Naive thymus-derived CD4-positive, alpha-beta T cell (primary cell): ENCODE measurements at regions of chr19 and their contacts with region 1.

Region 1: GRCh38 chr19:36214386-36215275 is at the starts of genes ZNF146 and ZNF565:
- DNase-seq: peak; percentile 87 to 97 (median 96)
- ATAC-seq: peak; percentile 94
- H3K4me3 ChIP-seq: peak within 1 kb of the TSS; percentile 97
- H3K4me3 Mint-ChIP-seq: no peak within 1 kb of the TSS
- H3K27ac ChIP-seq: peak within 1 kb of the TSS; percentile 94
- H3K27ac Mint-ChIP-seq: peak within 1 kb of the TSS in 2 of 9 donors; percentile 38 to 41
- H3K4me1 ChIP-seq: peaks cover 14 to 19% of the 10 kb centered on the region in 2 donors
- H3K4me1 Mint-ChIP-seq: peaks cover 13 to 28% (median 25%) of the 10 kb centered on the region in 7 donors
- H3K27me3 ChIP-seq: no peaks in the 10 kb centered on the region
- H3K27me3 Mint-ChIP-seq: no peaks in the 10 kb centered on the region
- total RNA-seq, gene ZNF146: 27.7 to 77.4 (median 57.7) TPM
- total RNA-seq, gene ZNF565: 2.7 to 11.6 (median 7.8) TPM

Region 2: GRCh38 chr19:35648017-35648961 is 566.3 kb before region 1 on chr19 and contains the start of gene COX6B1:
- CTCF ChIA-PET with region 1: no interaction called
- POLR2A ChIA-PET with region 1: no interaction called
- intact Hi-C with region 1: loop called in 1 of 2 experiments (anchors 5 kb)
- DNase-seq: peak; percentile 63 to 95 (median 91)
- ATAC-seq: peak; percentile 80
- H3K4me3 ChIP-seq: peak within 1 kb of the TSS; percentile 95
- H3K4me3 Mint-ChIP-seq: peak within 1 kb of the TSS; percentile 88 to 99 (median 97)
- H3K27ac ChIP-seq: peak within 1 kb of the TSS; percentile 89
- H3K27ac Mint-ChIP-seq: peak within 1 kb of the TSS; percentile 89 to 98 (median 95)
- H3K4me1 ChIP-seq: peaks cover 7 to 25% of the 10 kb centered on the region in 2 donors
- H3K4me1 Mint-ChIP-seq: peaks cover 17 to 67% (median 42%) of the 10 kb centered on the region in 7 donors
- H3K27me3 ChIP-seq: no peaks in the 10 kb centered on the region
- H3K27me3 Mint-ChIP-seq: no peaks in the 10 kb centered on the region
- total RNA-seq, gene COX6B1: 172 to 464 (median 232) TPM

Region 3: DNA sequence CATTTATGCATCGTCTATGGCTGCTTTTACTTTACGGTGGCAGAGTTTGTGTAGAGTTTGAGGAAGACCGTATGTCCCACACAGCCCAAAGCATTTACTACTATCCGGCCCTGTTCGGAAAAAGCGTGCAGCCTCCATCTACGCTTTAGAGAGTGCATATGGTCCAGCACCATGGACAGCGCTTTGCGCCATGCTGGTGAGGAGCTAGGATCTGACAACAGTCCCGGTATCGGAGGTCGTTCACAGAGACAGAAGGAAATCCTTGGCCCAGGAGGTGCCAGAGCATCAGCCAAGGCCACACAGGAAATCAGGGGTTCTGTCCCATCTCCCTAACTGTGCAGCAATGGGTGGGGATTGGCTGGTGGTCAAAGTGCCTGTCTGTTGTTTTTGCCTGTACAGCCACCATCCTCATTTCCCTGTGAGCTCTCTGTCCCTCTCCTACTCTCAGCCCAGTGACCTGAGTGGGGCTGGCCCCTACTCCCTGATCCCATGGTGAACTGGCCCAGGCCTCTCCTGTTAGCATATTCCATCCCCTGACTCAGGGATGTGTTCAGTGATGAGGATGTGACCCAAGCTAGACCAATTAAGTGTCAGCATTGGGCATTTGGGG is 385.8 kb before region 1 on chr19:
- CTCF ChIA-PET with region 1: no interaction called
- POLR2A ChIA-PET with region 1: no interaction called
- intact Hi-C with region 1: no loop called
- DNase-seq: peak in 7 of 9 donors; percentile 26 to 66 (median 40)
- ATAC-seq: peak; percentile 60
- H3K4me3 ChIP-seq: no peak overlapping the region
- H3K4me3 Mint-ChIP-seq: no peak overlapping the region
- H3K27ac ChIP-seq: no peak overlapping the region
- H3K27ac Mint-ChIP-seq: no peak overlapping the region
- H3K4me1 ChIP-seq: no peaks in the 10 kb centered on the region
- H3K4me1 Mint-ChIP-seq: peaks cover 0 to 2% (median 0%) of the 10 kb centered on the region in 7 donors
- H3K27me3 ChIP-seq: no peaks in the 10 kb centered on the region
- H3K27me3 Mint-ChIP-seq: peaks cover 10 to 36% (median 36%) of the 10 kb centered on the region in 5 donors

Region 4: GRCh38 chr19:36114763-36115452 is 99.7 kb before region 1 on chr19 and contains the start of gene POLR2I:
- CTCF ChIA-PET with region 1: no interaction called
- POLR2A ChIA-PET with region 1: interaction called, 13 read pairs
- intact Hi-C with region 1: loop called (anchors 1 kb)
- DNase-seq: peak; percentile 95 to 100 (median 99)
- ATAC-seq: peak; percentile 92
- H3K4me3 ChIP-seq: peak within 1 kb of the TSS; percentile 97
- H3K4me3 Mint-ChIP-seq: peak within 1 kb of the TSS; percentile 89 to 98 (median 96)
- H3K27ac ChIP-seq: peak within 1 kb of the TSS; percentile 90
- H3K27ac Mint-ChIP-seq: peak within 1 kb of the TSS; percentile 97 to 99 (median 98)
- H3K4me1 ChIP-seq: peaks cover 14 to 15% of the 10 kb centered on the region in 2 donors
- H3K4me1 Mint-ChIP-seq: peaks cover 27 to 54% (median 42%) of the 10 kb centered on the region in 7 donors
- H3K27me3 ChIP-seq: no peaks in the 10 kb centered on the region
- H3K27me3 Mint-ChIP-seq: peaks cover 0 to 5% (median 0%) of the 10 kb centered on the region in 5 donors
- total RNA-seq, gene POLR2I: 20.9 to 56.7 (median 44.7) TPM

Region 5: GRCh38 chr19:36196249-36196648 is 18.4 kb before region 1 on chr19:
- CTCF ChIA-PET with region 1: no interaction called
- POLR2A ChIA-PET with region 1: no interaction called
- intact Hi-C with region 1: no loop called
- DNase-seq: no peak
- ATAC-seq: no peak
- H3K4me3 ChIP-seq: no peak overlapping the region
- H3K4me3 Mint-ChIP-seq: no peak overlapping the region
- H3K27ac ChIP-seq: no peak overlapping the region
- H3K27ac Mint-ChIP-seq: no peak overlapping the region
- H3K4me1 ChIP-seq: no peaks in the 10 kb centered on the region
- H3K4me1 Mint-ChIP-seq: no peaks in the 10 kb centered on the region
- H3K27me3 ChIP-seq: no peaks in the 10 kb centered on the region
- H3K27me3 Mint-ChIP-seq: no peaks in the 10 kb centered on the region

Region 6: GRCh38 chr19:36266342-36266961 is 51.8 kb after region 1 on chr19:
- CTCF ChIA-PET with region 1: no interaction called
- POLR2A ChIA-PET with region 1: no interaction called
- intact Hi-C with region 1: no loop called
- DNase-seq: no peak
- ATAC-seq: no peak
- H3K4me3 ChIP-seq: no peak overlapping the region
- H3K4me3 Mint-ChIP-seq: peak overlapping the region in 1 of 10 donors; percentile 45
- H3K27ac ChIP-seq: no peak overlapping the region
- H3K27ac Mint-ChIP-seq: no peak overlapping the region
- H3K4me1 ChIP-seq: no peaks in the 10 kb centered on the region
- H3K4me1 Mint-ChIP-seq: no peaks in the 10 kb centered on the region
- H3K27me3 ChIP-seq: no peaks in the 10 kb centered on the region
- H3K27me3 Mint-ChIP-seq: no peaks in the 10 kb centered on the region

Region 7: GRCh38 chr19:36489118-36489919 is 274.7 kb after region 1 on chr19 and contains the start of gene ZNF566:
- CTCF ChIA-PET with region 1: no interaction called
- POLR2A ChIA-PET with region 1: interaction called, 5 read pairs
- intact Hi-C with region 1: loop called (anchors 1 kb)
- DNase-seq: peak; percentile 74 to 98 (median 94)
- ATAC-seq: peak; percentile 95
- H3K4me3 ChIP-seq: peak within 1 kb of the TSS; percentile 97
- H3K4me3 Mint-ChIP-seq: peak within 1 kb of the TSS; percentile 93 to 99 (median 98)
- H3K27ac ChIP-seq: peak within 1 kb of the TSS; percentile 90
- H3K27ac Mint-ChIP-seq: peak within 1 kb of the TSS; percentile 93 to 99 (median 98)
- H3K4me1 ChIP-seq: peaks cover 9 to 10% of the 10 kb centered on the region in 2 donors
- H3K4me1 Mint-ChIP-seq: peaks cover 22 to 43% (median 30%) of the 10 kb centered on the region in 7 donors
- H3K27me3 ChIP-seq: no peaks in the 10 kb centered on the region
- H3K27me3 Mint-ChIP-seq: no peaks in the 10 kb centered on the region
- total RNA-seq, gene ZNF566: 9.2 to 29.8 (median 9.3) TPM

Region 8: DNA sequence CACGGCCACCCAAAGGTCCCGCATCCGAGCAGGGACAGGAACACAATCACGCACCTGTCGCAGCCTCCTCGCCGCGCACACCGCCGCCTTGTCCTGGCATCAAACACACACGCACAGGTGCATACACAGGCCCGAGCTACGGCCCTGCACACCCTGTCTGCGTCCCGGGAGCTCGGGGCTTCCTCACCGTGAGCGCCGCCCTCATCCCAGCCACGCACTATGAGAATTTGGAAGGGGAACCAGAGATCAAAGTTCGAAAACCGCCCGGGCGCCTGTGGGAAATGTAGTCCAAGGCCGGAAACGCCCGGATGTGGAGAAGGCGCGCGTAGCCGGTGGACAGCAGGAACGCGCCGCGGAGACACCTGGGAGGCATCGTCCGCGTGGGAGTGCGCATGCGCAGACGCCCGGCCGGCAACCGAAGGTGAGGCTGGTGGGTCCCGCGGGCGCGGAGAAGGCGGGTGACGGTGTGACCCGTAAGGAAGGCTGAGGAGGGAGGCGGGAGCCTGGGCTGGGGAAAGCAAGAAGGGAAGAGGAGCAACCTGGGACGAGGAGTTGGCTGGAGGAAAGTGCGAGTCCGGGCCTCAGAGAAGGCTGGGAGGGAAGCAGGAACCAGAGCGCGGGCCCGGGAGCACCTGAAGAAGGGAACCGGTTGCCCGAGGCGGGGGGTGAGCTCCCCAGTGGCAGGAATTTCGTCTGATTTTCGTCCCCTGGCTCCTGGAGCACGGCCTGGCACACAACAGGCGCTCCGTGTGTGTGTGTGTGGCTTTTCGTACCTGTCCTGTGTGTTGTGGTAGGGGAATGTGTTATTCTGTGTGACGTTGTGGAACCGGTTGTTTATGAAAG is 472.8 kb after region 1 on chr19 and contains the start of gene ZNF567:
- CTCF ChIA-PET with region 1: no interaction called
- POLR2A ChIA-PET with region 1: no interaction called
- intact Hi-C with region 1: loop called (anchors 1 kb)
- DNase-seq: peak; percentile 90 to 99 (median 93)
- ATAC-seq: peak; percentile 97
- H3K4me3 ChIP-seq: peak within 1 kb of the TSS; percentile 85
- H3K4me3 Mint-ChIP-seq: peak within 1 kb of the TSS; percentile 94 to 100 (median 98)
- H3K27ac ChIP-seq: peak within 1 kb of the TSS; percentile 86
- H3K27ac Mint-ChIP-seq: peak within 1 kb of the TSS; percentile 92 to 97 (median 95)
- H3K4me1 ChIP-seq: peaks cover 13 to 22% of the 10 kb centered on the region in 2 donors
- H3K4me1 Mint-ChIP-seq: peaks cover 26 to 49% (median 40%) of the 10 kb centered on the region in 7 donors
- H3K27me3 ChIP-seq: no peaks in the 10 kb centered on the region
- H3K27me3 Mint-ChIP-seq: peaks cover 0 to 5% (median 0%) of the 10 kb centered on the region in 5 donors
- total RNA-seq, gene ZNF567: 7.0 to 18.3 (median 9.3) TPM

Region 9: GRCh38 chr19:37077934-37078725 is 863.5 kb after region 1 on chr19 and contains the start of gene ZNF420:
- CTCF ChIA-PET with region 1: no interaction called
- POLR2A ChIA-PET with region 1: interaction called, 4 read pairs
- intact Hi-C with region 1: loop called in 1 of 2 experiments (anchors 1 kb)
- DNase-seq: peak; percentile 64 to 89 (median 84)
- ATAC-seq: peak; percentile 98
- H3K4me3 ChIP-seq: peak within 1 kb of the TSS; percentile 92
- H3K4me3 Mint-ChIP-seq: peak within 1 kb of the TSS; percentile 90 to 100 (median 96)
- H3K27ac ChIP-seq: peak within 1 kb of the TSS; percentile 82
- H3K27ac Mint-ChIP-seq: peak within 1 kb of the TSS; percentile 70 to 99 (median 94)
- H3K4me1 ChIP-seq: peaks cover 11 to 19% of the 10 kb centered on the region in 2 donors
- H3K4me1 Mint-ChIP-seq: peaks cover 16 to 43% (median 34%) of the 10 kb centered on the region in 7 donors
- H3K27me3 ChIP-seq: no peaks in the 10 kb centered on the region
- H3K27me3 Mint-ChIP-seq: no peaks in the 10 kb centered on the region
- total RNA-seq, gene ZNF420: 10.8 to 34.9 (median 15.9) TPM

Region 10: GRCh38 chr19:37160153-37160552 is 945.5 kb after region 1 on chr19:
- CTCF ChIA-PET with region 1: no interaction called
- POLR2A ChIA-PET with region 1: no interaction called
- intact Hi-C with region 1: no loop called
- DNase-seq: no peak
- ATAC-seq: no peak
- H3K4me3 ChIP-seq: no peak overlapping the region
- H3K4me3 Mint-ChIP-seq: no peak overlapping the region
- H3K27ac ChIP-seq: no peak overlapping the region
- H3K27ac Mint-ChIP-seq: no peak overlapping the region
- H3K4me1 ChIP-seq: no peaks in the 10 kb centered on the region
- H3K4me1 Mint-ChIP-seq: peaks cover 0 to 4% (median 0%) of the 10 kb centered on the region in 7 donors
- H3K27me3 ChIP-seq: no peaks in the 10 kb centered on the region
- H3K27me3 Mint-ChIP-seq: no peaks in the 10 kb centered on the region

Region 11: DNA sequence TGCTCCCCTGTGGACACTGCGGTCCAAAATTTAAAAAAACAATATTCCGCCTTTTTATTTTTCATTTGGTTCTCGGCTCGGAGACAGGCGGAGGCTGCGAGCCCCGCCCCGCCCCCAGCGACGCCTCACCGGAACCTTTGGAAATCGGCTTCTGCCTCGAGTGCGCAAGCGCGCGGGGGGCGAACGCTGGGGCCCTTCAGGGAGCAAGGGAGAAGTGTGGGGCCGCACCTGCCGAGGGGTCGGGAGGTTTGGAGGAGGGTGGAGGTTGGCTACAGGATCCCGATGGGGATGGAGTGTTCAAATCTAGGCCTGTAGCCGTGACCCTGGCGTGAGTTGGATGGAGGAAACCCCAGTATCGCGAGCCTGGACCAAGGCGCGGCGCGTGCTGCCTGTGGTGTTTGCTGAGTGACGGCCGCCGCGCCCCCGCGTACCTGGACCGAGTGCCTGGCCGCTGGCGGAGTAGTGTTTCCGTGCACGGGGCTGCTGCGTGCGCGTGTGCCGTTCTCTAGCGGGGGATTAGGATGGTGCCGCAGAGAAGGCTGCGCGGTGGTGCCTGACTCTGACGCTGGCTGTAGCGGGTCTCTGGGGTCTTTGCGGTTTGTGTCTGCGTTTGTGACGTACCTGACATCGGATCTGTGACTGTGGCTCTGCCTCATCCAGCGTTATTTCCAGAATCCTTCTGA is 1441.2 kb after region 1 on chr19:
- CTCF ChIA-PET with region 1: no interaction called
- POLR2A ChIA-PET with region 1: no interaction called
- intact Hi-C with region 1: loop called in 1 of 2 experiments (anchors 10 kb)
- DNase-seq: peak; percentile 74 to 90 (median 86)
- ATAC-seq: peak; percentile 86
- H3K4me3 ChIP-seq: peak overlapping the region; percentile 95
- H3K4me3 Mint-ChIP-seq: peak overlapping the region; percentile 82 to 99 (median 96)
- H3K27ac ChIP-seq: peak overlapping the region; percentile 89
- H3K27ac Mint-ChIP-seq: peak overlapping the region; percentile 81 to 99 (median 97)
- H3K4me1 ChIP-seq: peaks cover 8 to 16% of the 10 kb centered on the region in 2 donors
- H3K4me1 Mint-ChIP-seq: peaks cover 28 to 40% (median 33%) of the 10 kb centered on the region in 7 donors
- H3K27me3 ChIP-seq: no peaks in the 10 kb centered on the region
- H3K27me3 Mint-ChIP-seq: peaks cover 0 to 3% (median 0%) of the 10 kb centered on the region in 5 donors